ENCODE measurements at regions of chr6 and their contacts with region 1.

Region 1: GRCh38 chr6:33248925-33249731 is 22.5 kb downstream of the VPS52 start:
- DNase-seq: peak; percentile 79 to 97 (median 94)
- ATAC-seq: peak; percentile 91
- H3K4me3 ChIP-seq: peak overlapping the region; percentile 81
- H3K4me3 Mint-ChIP-seq: peak overlapping the region; percentile 81 to 94 (median 90)
- H3K27ac ChIP-seq: peak overlapping the region; percentile 96
- H3K27ac Mint-ChIP-seq: peak overlapping the region; percentile 82 to 98 (median 94)
- H3K4me1 ChIP-seq: peaks cover 11 to 15% of the 10 kb centered on the region in 2 donors
- H3K4me1 Mint-ChIP-seq: peaks cover 26 to 43% (median 35%) of the 10 kb centered on the region in 7 donors
- H3K27me3 ChIP-seq: no peaks in the 10 kb centered on the region
- H3K27me3 Mint-ChIP-seq: peaks cover 0 to 4% (median 0%) of the 10 kb centered on the region in 5 donors

Region 2: DNA sequence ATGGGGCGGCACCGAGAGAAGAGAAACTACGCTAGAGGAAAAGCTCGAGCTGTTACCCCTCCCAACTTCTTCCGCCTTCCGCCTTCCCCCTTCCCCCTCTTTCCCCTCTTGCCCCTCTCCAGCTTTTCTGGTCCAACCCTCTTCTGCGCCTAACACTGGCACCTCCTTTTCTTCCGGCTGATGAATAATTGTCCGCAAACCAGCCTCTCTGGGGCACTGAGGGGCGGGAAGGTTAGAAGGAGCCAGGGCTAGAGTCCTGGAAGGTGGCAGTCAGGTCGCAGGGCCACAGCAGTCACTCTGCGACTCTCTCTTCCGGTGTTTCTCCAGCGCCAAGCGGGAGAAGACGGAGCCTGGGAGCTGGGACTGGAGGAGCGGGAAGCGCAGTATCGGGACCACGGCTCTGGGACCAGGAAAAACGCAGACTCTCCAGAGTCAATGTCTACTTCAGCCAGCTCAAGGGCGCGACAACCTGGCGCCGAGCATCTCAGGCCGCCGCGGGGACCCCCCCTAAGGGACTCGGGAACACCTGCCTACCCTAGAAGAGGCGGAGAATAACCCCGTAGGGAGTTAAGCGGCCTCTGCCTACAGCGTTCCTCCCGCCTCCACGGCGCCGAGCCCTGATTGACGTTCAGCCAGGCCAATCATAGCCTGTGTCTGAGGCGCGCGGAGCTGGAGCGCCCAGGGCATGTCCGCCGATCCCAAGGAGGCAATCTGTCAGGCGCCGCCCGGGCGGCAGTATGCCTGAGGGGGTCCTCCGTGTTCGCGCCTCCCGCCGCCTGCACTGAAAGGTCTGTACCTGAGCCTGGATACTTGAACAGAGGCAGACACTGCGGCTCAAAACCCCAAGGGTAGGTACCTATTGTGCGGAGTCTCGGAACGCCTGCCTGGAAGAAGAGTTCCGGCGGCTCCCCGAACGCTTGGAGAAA is 354.8 kb before region 1 on chr6:
- CTCF ChIA-PET with region 1: no interaction called
- POLR2A ChIA-PET with region 1: no interaction called
- intact Hi-C with region 1: loop called in 1 of 2 experiments (anchors 5 kb)
- DNase-seq: peak; percentile 89 to 98 (median 94)
- ATAC-seq: peak; percentile 99
- H3K4me3 ChIP-seq: peak overlapping the region; percentile 81
- H3K4me3 Mint-ChIP-seq: peak overlapping the region; percentile 91 to 100 (median 99)
- H3K27ac ChIP-seq: peak overlapping the region; percentile 78
- H3K27ac Mint-ChIP-seq: peak overlapping the region; percentile 78 to 97 (median 94)
- H3K4me1 ChIP-seq: peaks cover 12 to 13% of the 10 kb centered on the region in 2 donors
- H3K4me1 Mint-ChIP-seq: peaks cover 30 to 43% (median 36%) of the 10 kb centered on the region in 7 donors
- H3K27me3 ChIP-seq: no peaks in the 10 kb centered on the region
- H3K27me3 Mint-ChIP-seq: peaks cover 0 to 4% (median 0%) of the 10 kb centered on the region in 5 donors

Region 3: GRCh38 chr6:33118525-33119123 is 130.5 kb before region 1 on chr6:
- CTCF ChIA-PET with region 1: interaction called, 16 read pairs
- POLR2A ChIA-PET with region 1: interaction called, 5 read pairs
- intact Hi-C with region 1: loop called (anchors 1 kb)
- DNase-seq: peak in 7 of 9 donors; percentile 44 to 75 (median 65)
- ATAC-seq: peak; percentile 85
- H3K4me3 ChIP-seq: no peak overlapping the region
- H3K4me3 Mint-ChIP-seq: peak overlapping the region in 1 of 10 donors; percentile 12
- H3K27ac ChIP-seq: no peak overlapping the region
- H3K27ac Mint-ChIP-seq: no peak overlapping the region
- H3K4me1 ChIP-seq: peaks cover 0 to 4% of the 10 kb centered on the region in 2 donors
- H3K4me1 Mint-ChIP-seq: peaks cover 4 to 21% (median 13%) of the 10 kb centered on the region in 7 donors
- H3K27me3 ChIP-seq: peaks cover 0 to 12% of the 10 kb centered on the region in 2 donors
- H3K27me3 Mint-ChIP-seq: peaks cover 40 to 79% (median 45%) of the 10 kb centered on the region in 5 donors

Region 4: GRCh38 chr6:33208091-33208967 is 40.8 kb before region 1 on chr6 and contains the start of gene RING1:
- CTCF ChIA-PET with region 1: interaction called, 13 read pairs
- POLR2A ChIA-PET with region 1: interaction called, 31 read pairs
- intact Hi-C with region 1: loop called (anchors 1 kb)
- DNase-seq: peak; percentile 80 to 93 (median 87)
- ATAC-seq: peak; percentile 79
- H3K4me3 ChIP-seq: peak within 1 kb of the TSS; percentile 92
- H3K4me3 Mint-ChIP-seq: peak within 1 kb of the TSS; percentile 83 to 97 (median 90)
- H3K27ac ChIP-seq: peak within 1 kb of the TSS; percentile 98
- H3K27ac Mint-ChIP-seq: peak within 1 kb of the TSS; percentile 87 to 96 (median 95)
- H3K4me1 ChIP-seq: peaks cover 23 to 34% of the 10 kb centered on the region in 2 donors
- H3K4me1 Mint-ChIP-seq: peaks cover 43 to 58% (median 52%) of the 10 kb centered on the region in 7 donors
- H3K27me3 ChIP-seq: peaks cover 0 to 3% of the 10 kb centered on the region in 2 donors
- H3K27me3 Mint-ChIP-seq: peaks cover 0 to 15% (median 6%) of the 10 kb centered on the region in 5 donors
- total RNA-seq, gene RING1: 36.2 to 47.2 (median 44.5) TPM

Region 5: DNA sequence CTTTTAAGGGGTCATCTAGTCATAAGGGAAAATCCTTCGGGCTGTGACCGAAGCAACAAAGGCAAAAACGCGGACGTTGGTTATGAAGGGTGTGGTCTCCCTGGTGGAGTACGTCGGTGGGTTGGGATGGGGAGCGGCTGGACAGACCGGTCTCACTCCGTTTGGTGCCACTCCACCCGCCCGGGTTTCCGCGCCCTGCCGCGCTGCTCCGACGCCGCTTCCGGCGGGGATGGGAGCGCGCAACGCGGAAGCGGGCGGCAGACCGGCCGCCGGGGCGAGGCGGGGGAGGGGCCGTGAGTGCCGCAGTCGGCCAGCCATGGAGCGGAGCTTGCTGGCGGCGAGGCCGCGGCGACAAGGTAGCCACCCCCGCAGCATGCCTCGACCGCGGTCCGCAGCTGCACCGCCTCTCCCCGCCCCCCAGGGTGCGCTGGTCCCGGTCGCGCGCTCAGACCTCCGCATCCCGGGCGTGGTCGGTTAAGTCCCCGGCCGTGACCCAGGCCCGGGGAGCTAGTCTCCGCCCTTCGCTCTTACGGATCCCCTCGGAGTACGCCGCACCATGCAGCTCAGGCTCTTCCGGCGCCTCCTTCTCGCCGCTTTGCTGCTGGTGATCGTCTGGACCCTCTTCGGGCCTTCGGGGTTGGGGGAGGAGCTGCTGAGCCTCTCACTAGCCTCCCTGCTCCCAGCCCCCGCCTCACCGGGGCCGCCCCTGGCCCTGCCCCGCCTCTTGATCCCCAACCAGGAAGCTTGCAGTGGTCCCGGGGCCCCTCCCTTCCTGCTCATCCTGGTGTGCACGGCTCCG is 27.9 kb after region 1 on chr6 and contains the start of gene B3GALT4:
- CTCF ChIA-PET with region 1: interaction called, 4 read pairs
- POLR2A ChIA-PET with region 1: interaction called, 101 read pairs
- intact Hi-C with region 1: loop called in 1 of 2 experiments (anchors 1 kb)
- DNase-seq: peak; percentile 55 to 88 (median 63)
- ATAC-seq: peak; percentile 81
- H3K4me3 ChIP-seq: peak within 1 kb of the TSS; percentile 67
- H3K4me3 Mint-ChIP-seq: peak within 1 kb of the TSS; percentile 84 to 99 (median 92)
- H3K27ac ChIP-seq: peak within 1 kb of the TSS; percentile 87
- H3K27ac Mint-ChIP-seq: peak within 1 kb of the TSS; percentile 88 to 98 (median 93)
- H3K4me1 ChIP-seq: peaks cover 47 to 50% of the 10 kb centered on the region in 2 donors
- H3K4me1 Mint-ChIP-seq: peaks cover 38 to 83% (median 65%) of the 10 kb centered on the region in 7 donors
- H3K27me3 ChIP-seq: no peaks in the 10 kb centered on the region
- H3K27me3 Mint-ChIP-seq: no peaks in the 10 kb centered on the region
- total RNA-seq, gene B3GALT4: 12.9 to 48.0 (median 18.2) TPM

Region 6: GRCh38 chr6:33317669-33318425 is 68.7 kb after region 1 on chr6 and contains the start of gene ZBTB22:
- CTCF ChIA-PET with region 1: no interaction called
- POLR2A ChIA-PET with region 1: interaction called, 17 read pairs
- intact Hi-C with region 1: loop called (anchors 1 kb)
- DNase-seq: peak; percentile 87 to 97 (median 96)
- ATAC-seq: peak; percentile 73
- H3K4me3 ChIP-seq: peak within 1 kb of the TSS; percentile 97
- H3K4me3 Mint-ChIP-seq: peak within 1 kb of the TSS; percentile 81 to 100 (median 100)
- H3K27ac ChIP-seq: peak within 1 kb of the TSS; percentile 99
- H3K27ac Mint-ChIP-seq: peak within 1 kb of the TSS; percentile 97 to 99 (median 98)
- H3K4me1 ChIP-seq: peaks cover 59 to 62% of the 10 kb centered on the region in 2 donors
- H3K4me1 Mint-ChIP-seq: peaks cover 53 to 85% (median 75%) of the 10 kb centered on the region in 7 donors
- H3K27me3 ChIP-seq: no peaks in the 10 kb centered on the region
- H3K27me3 Mint-ChIP-seq: peaks cover 0 to 2% (median 0%) of the 10 kb centered on the region in 5 donors
- total RNA-seq, gene ZBTB22: 15.5 to 30.1 (median 20.5) TPM

Region 7: DNA sequence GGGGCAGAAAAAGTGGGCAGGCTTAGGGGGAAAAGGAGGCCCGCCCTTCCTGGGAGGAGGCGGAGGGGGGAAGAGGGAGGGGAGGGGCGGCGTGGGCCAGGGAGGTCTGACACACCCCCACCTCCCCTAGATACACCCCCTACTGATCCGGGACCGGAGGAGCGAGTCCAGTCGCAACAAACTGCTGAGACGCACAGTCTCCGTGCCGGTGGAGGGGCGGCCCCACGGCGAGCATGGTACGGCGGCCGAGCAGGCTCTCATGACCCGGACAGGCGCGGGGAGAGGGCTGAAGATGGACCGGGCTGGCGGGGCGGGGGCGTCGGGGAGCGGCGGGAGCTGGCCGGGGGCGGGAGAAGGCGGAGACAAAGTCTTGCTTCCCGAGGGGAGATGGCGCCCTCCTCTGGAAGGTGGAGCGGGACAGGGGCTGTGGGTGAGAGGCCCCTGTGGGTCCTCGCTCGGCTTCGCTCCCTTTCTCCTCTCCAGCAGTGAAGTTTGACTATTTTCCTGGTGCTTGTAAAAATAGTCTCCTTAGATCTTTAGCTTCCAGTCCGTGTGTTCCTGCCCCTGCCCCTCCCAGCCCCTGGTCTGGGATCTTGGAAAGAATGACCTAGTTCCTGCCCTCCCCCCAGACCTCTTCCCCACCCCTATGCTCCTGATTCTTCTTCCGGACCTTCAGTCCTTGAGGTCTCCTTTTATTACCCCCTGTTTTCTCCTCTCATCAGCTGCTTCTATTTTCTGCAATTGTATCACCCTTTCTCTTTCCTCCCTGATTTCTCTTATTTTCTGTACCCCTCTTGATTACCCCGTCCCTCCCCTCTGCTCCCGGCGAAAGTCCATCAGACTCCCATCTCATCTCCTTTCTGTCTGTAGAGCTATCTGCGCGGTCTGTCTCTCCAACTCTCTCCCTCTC is 176.8 kb after region 1 on chr6:
- CTCF ChIA-PET with region 1: interaction called, 3 read pairs
- POLR2A ChIA-PET with region 1: interaction called, 4 read pairs
- intact Hi-C with region 1: loop called in 1 of 2 experiments (anchors 1 kb)
- DNase-seq: peak; percentile 57 to 85 (median 74)
- ATAC-seq: peak; percentile 72
- H3K4me3 ChIP-seq: peak overlapping the region; percentile 73
- H3K4me3 Mint-ChIP-seq: peak overlapping the region; percentile 84 to 98 (median 95)
- H3K27ac ChIP-seq: peak overlapping the region; percentile 88
- H3K27ac Mint-ChIP-seq: peak overlapping the region; percentile 88 to 99 (median 95)
- H3K4me1 ChIP-seq: peaks cover 43 to 46% of the 10 kb centered on the region in 2 donors
- H3K4me1 Mint-ChIP-seq: peaks cover 64 to 89% (median 82%) of the 10 kb centered on the region in 7 donors
- H3K27me3 ChIP-seq: no peaks in the 10 kb centered on the region
- H3K27me3 Mint-ChIP-seq: no peaks in the 10 kb centered on the region

Measured in naive thymus-derived CD4-positive, alpha-beta T cell (primary cell).